Endothelial cell of umbilical vein (primary cell): ENCODE measurements at regions of chr3 and their contacts with region 1.

Region 1: GRCh38 chr3:37967260-37967881 is 23.2 kb upstream of the VILL start:
- DNase-seq: peak; percentile 65
- H3K4me3 ChIP-seq: no peak overlapping the region
- H3K27ac ChIP-seq: no peak overlapping the region
- H3K4me1 ChIP-seq: peaks cover 7% of the 10 kb centered on the region
- H3K27me3 ChIP-seq: no peaks in the 10 kb centered on the region
- CTCF ChIP-seq: peak; percentile 85 to 92
- POLR2A ChIP-seq: no peak

Region 2: GRCh38 chr3:37627951-37628620 is 339.3 kb before region 1 on chr3:
- CTCF ChIA-PET with region 1: no interaction called
- POLR2A ChIA-PET with region 1: no interaction called
- dilution Hi-C with region 1: no loop called
- intact Hi-C with region 1: no loop called
- DNase-seq: no peak
- H3K4me3 ChIP-seq: no peak overlapping the region
- H3K27ac ChIP-seq: no peak overlapping the region
- H3K4me1 ChIP-seq: no peaks in the 10 kb centered on the region
- H3K27me3 ChIP-seq: no peaks in the 10 kb centered on the region
- CTCF ChIP-seq: no peak
- POLR2A ChIP-seq: no peak

Region 3: GRCh38 chr3:37862219-37862902 is 105.0 kb before region 1 on chr3:
- CTCF ChIA-PET with region 1: interaction called, 20 read pairs
- POLR2A ChIA-PET with region 1: no interaction called
- dilution Hi-C with region 1: no loop called
- intact Hi-C with region 1: no loop called
- DNase-seq: peak; percentile 46
- H3K4me3 ChIP-seq: peak overlapping the region; percentile 6 to 43 (median 31)
- H3K27ac ChIP-seq: no peak overlapping the region
- H3K4me1 ChIP-seq: peaks cover 19% of the 10 kb centered on the region
- H3K27me3 ChIP-seq: no peaks in the 10 kb centered on the region
- CTCF ChIP-seq: no peak
- POLR2A ChIP-seq: no peak

Region 4: GRCh38 chr3:37899101-37899707 is 68.2 kb before region 1 on chr3:
- CTCF ChIA-PET with region 1: interaction called, 11 read pairs
- POLR2A ChIA-PET with region 1: no interaction called
- dilution Hi-C with region 1: no loop called
- intact Hi-C with region 1: no loop called
- DNase-seq: no peak
- H3K4me3 ChIP-seq: no peak overlapping the region
- H3K27ac ChIP-seq: peak overlapping the region; percentile 25
- H3K4me1 ChIP-seq: peaks cover 18% of the 10 kb centered on the region
- H3K27me3 ChIP-seq: no peaks in the 10 kb centered on the region
- CTCF ChIP-seq: no peak
- POLR2A ChIP-seq: no peak

Region 5: GRCh38 chr3:37922721-37923568 is 44.4 kb before region 1 on chr3:
- CTCF ChIA-PET with region 1: interaction called, 16 read pairs
- POLR2A ChIA-PET with region 1: no interaction called
- dilution Hi-C with region 1: no loop called
- intact Hi-C with region 1: no loop called
- DNase-seq: no peak
- H3K4me3 ChIP-seq: no peak overlapping the region
- H3K27ac ChIP-seq: no peak overlapping the region
- H3K4me1 ChIP-seq: peaks cover 2% of the 10 kb centered on the region
- H3K27me3 ChIP-seq: no peaks in the 10 kb centered on the region
- CTCF ChIP-seq: no peak
- POLR2A ChIP-seq: no peak

Region 6: DNA sequence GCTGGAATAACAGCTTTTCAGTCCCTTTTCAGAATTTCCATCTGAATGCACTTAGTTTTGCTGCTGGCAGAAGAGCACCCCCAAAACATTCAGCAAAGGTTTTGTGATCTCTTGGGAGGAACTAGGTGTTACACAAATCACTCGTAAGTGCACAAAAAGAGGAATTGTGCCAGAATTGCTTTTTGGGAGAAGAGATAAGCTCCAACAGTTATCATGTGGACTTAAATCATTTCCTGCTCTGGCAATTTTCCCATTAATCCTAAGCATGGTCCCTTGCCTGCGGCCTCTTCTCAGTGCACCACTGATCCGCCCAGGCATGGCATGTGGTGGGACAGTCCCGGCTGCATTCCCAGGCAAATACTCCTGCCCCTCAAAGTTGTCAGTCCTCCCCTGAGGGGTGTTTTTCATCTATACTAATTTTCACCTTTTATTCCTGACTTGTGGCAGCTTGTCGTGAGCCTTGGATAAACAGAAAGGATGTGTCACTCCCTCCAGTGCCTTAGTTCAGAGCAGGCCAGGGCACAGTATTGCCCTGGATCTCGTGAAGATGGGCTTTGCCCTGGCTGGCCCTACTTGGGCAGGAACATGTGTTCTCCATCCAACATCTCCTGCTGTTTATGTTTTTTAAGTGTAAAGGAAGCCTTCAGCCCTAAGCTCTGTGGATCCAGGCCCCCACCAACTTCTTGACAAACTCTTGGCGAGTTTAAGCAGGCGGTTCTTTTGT is 21.4 kb before region 1 on chr3:
- CTCF ChIA-PET with region 1: interaction called, 32 read pairs
- POLR2A ChIA-PET with region 1: no interaction called
- dilution Hi-C with region 1: no loop called
- intact Hi-C with region 1: no loop called
- DNase-seq: peak; percentile 87
- H3K4me3 ChIP-seq: no peak overlapping the region
- H3K27ac ChIP-seq: peak overlapping the region; percentile 16
- H3K4me1 ChIP-seq: peaks cover 27% of the 10 kb centered on the region
- H3K27me3 ChIP-seq: no peaks in the 10 kb centered on the region
- CTCF ChIP-seq: no peak
- POLR2A ChIP-seq: peak; percentile 35

Region 7: DNA sequence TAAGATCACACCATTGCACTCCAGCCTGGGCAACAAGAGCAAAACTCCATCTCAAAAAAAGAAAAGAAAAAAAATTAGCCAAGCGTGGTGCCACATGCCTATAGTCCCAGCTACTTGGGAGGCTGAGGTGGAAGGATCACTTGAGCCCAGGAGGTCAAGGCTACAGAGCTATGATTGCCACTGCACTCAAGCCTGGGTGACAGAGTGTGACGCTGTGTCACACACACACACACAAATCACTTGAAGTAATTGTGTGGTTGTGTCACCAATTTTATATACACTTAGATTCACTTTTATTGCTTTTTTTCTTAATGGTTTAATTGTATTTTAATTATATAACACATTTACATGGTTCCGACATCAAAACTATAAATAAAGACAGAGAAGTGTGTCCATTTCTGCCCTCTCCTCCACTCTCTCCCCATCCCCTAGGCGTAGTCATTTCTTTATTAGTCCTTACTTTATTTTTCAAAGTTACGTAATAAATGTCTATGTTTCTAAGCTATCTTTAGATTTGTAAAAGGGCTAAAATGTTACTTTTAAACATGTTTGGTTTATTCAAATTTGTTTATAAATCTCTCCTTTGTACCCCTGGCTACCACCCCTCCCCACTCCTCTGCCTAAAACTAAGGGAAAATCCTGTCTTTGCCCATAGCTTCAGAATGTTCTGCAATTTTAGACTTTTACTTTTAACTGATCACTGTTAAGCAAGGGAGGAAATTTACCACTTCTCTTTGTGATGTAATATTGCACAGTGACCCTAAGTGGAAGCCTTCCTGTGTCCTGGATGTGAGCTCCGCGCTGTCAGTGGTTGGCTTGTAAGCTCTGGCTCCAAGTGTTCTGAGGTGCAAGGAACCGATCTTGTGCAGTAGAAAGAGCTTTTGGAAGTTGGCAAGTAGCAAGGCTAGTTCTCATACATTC is 12.4 kb after region 1 on chr3:
- CTCF ChIA-PET with region 1: interaction called, 53 read pairs
- POLR2A ChIA-PET with region 1: no interaction called
- dilution Hi-C with region 1: no loop called
- intact Hi-C with region 1: no loop called
- DNase-seq: no peak
- H3K4me3 ChIP-seq: no peak overlapping the region
- H3K27ac ChIP-seq: no peak overlapping the region
- H3K4me1 ChIP-seq: no peaks in the 10 kb centered on the region
- H3K27me3 ChIP-seq: no peaks in the 10 kb centered on the region
- CTCF ChIP-seq: no peak
- POLR2A ChIP-seq: no peak

Region 8: GRCh38 chr3:38009807-38010591 is 42.6 kb after region 1 on chr3:
- CTCF ChIA-PET with region 1: no interaction called
- POLR2A ChIA-PET with region 1: no interaction called
- dilution Hi-C with region 1: no loop called
- intact Hi-C with region 1: no loop called
- DNase-seq: no peak
- H3K4me3 ChIP-seq: no peak overlapping the region
- H3K27ac ChIP-seq: no peak overlapping the region
- H3K4me1 ChIP-seq: no peaks in the 10 kb centered on the region
- H3K27me3 ChIP-seq: no peaks in the 10 kb centered on the region
- CTCF ChIP-seq: no peak
- POLR2A ChIP-seq: no peak